MCF 10A (cell line): ENCODE measurements at regions of chr6 and their contacts with region 1.

Region 1: DNA sequence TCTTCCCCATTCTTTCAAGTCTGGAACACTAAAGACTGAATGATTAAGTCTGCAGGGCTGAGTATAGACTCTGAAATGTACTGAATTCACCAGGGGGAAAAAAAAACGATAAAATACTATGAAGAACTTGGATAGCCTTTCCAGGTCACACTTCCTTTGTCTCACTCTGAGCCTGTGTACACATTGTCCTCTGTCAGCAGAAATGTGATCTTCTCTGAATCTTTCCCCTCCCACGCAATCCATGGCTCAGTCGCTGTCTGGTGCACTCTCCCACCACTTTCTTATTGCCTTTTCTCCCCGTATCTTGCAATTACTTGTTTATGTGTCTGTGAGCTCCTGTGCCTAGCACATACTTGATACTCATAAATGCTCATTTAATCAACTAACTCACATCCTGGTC is 212.6 kb upstream of the RSPO3 start:
- DNase-seq: no peak
- H3K4me3 Mint-ChIP-seq: no peak overlapping the region
- H3K27ac Mint-ChIP-seq: no peak overlapping the region
- H3K4me1 Mint-ChIP-seq: no peaks in the 10 kb centered on the region
- H3K27me3 Mint-ChIP-seq: peaks cover 19% of the 10 kb centered on the region
- CTCF ChIP-seq: no peak

Region 2: GRCh38 chr6:126372626-126373025 is 533.3 kb before region 1 on chr6:
- CTCF ChIA-PET with region 1: no interaction called
- POLR2A ChIA-PET with region 1: no interaction called
- intact Hi-C with region 1: loop called (anchors 10 kb)
- DNase-seq: no peak
- H3K4me3 Mint-ChIP-seq: no peak overlapping the region
- H3K27ac Mint-ChIP-seq: no peak overlapping the region
- H3K4me1 Mint-ChIP-seq: no peaks in the 10 kb centered on the region
- H3K27me3 Mint-ChIP-seq: no peaks in the 10 kb centered on the region
- CTCF ChIP-seq: no peak